MCF 10A (cell line): ENCODE measurements at regions of chr11 and their contacts with region 1.

Region 1: GRCh38 chr11:45964911-45965389 is 42.5 kb downstream of the LARGE2 start:
- DNase-seq: peak; percentile 73
- H3K4me3 Mint-ChIP-seq: no peak overlapping the region
- H3K27ac Mint-ChIP-seq: no peak overlapping the region
- H3K4me1 Mint-ChIP-seq: peaks cover 6% of the 10 kb centered on the region
- H3K27me3 Mint-ChIP-seq: no peaks in the 10 kb centered on the region
- CTCF ChIP-seq: peak; percentile 75

Region 2: GRCh38 chr11:45872513-45873356 is 92.2 kb before region 1 on chr11:
- CTCF ChIA-PET with region 1: interaction called, 11 read pairs
- POLR2A ChIA-PET with region 1: no interaction called
- intact Hi-C with region 1: no loop called
- DNase-seq: peak; percentile 75
- H3K4me3 Mint-ChIP-seq: no peak overlapping the region
- H3K27ac Mint-ChIP-seq: no peak overlapping the region
- H3K4me1 Mint-ChIP-seq: no peaks in the 10 kb centered on the region
- H3K27me3 Mint-ChIP-seq: no peaks in the 10 kb centered on the region
- CTCF ChIP-seq: peak; percentile 76

Region 3: DNA sequence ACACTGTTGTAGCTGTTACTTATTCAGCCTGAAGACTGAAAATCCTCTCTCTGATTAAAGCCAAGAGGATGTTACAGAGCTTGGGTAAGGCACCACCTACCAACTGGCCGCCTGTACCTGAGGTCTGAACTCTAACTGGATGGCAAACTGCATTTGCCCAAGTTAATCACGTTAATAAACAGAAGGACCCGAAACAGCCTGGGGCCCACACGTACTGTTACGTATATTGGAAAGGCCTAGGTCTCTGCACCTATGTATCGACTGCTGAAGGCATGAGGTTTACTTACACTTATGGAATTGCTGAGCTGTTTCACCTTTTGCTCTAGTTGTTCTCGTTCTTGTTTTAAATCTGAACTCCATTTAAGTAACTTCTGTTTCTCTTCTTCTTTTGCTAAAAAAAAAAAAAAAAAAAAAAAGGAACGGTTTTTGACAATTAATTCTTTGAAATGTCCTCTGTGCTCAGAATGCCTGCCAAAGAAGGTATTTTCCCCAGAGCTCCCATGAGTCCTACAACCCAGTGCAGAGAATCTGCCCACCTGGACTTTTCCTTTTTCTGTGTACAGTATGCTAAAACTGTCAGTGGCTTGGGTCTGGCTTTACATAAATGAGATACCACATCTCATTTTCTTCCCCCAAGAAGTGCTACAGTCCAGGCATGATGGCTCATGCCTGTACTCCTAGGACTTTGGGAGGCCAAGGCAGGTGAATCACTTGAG is 29.4 kb before region 1 on chr11:
- CTCF ChIA-PET with region 1: interaction called, 11 read pairs
- POLR2A ChIA-PET with region 1: no interaction called
- intact Hi-C with region 1: no loop called
- DNase-seq: no peak
- H3K4me3 Mint-ChIP-seq: no peak overlapping the region
- H3K27ac Mint-ChIP-seq: no peak overlapping the region
- H3K4me1 Mint-ChIP-seq: peaks cover 14% of the 10 kb centered on the region
- H3K27me3 Mint-ChIP-seq: no peaks in the 10 kb centered on the region
- CTCF ChIP-seq: no peak

Region 4: DNA sequence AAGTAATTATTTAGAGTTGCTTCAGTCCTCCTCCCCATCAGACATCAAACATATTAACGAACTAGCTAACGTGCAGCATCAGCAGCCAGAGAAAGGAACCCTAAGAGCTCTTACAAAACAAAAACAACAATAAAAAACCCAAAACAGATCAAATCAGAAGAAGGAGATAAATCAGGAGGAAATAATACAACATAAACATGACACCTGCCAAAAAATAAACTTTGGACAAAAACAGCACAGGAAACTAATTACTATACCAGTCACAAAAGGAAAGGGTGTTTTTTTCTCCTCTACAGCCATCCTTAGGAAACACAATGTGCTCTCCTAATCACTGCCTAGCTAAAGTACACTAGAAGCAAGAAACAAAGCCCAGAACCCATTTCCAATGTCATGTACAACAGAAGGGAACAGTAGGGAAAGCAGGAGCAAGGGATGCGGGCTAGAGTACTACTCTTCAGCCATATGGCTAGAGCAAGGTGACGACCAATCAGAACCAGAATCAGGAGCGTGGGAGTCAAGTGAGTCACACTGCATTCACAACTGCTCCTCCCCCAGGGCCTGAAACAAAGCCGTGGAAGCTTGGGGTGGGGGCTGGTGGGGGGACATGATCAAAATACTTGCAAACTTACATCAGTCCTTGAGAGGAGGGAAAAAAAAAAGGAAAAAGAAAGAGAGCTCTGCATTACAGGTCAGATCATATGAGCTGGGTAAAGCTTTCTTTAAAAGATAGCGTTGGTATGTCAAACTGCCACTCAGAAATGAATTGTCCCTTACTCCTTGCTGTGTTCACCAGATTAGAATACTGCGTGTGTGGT is 17.9 kb after region 1 on chr11:
- CTCF ChIA-PET with region 1: interaction called, 64 read pairs
- POLR2A ChIA-PET with region 1: interaction called, 8 read pairs
- intact Hi-C with region 1: no loop called
- DNase-seq: peak; percentile 83
- H3K4me3 Mint-ChIP-seq: no peak overlapping the region
- H3K27ac Mint-ChIP-seq: no peak overlapping the region
- H3K4me1 Mint-ChIP-seq: peaks cover 16% of the 10 kb centered on the region
- H3K27me3 Mint-ChIP-seq: no peaks in the 10 kb centered on the region
- CTCF ChIP-seq: no peak

Region 5: DNA sequence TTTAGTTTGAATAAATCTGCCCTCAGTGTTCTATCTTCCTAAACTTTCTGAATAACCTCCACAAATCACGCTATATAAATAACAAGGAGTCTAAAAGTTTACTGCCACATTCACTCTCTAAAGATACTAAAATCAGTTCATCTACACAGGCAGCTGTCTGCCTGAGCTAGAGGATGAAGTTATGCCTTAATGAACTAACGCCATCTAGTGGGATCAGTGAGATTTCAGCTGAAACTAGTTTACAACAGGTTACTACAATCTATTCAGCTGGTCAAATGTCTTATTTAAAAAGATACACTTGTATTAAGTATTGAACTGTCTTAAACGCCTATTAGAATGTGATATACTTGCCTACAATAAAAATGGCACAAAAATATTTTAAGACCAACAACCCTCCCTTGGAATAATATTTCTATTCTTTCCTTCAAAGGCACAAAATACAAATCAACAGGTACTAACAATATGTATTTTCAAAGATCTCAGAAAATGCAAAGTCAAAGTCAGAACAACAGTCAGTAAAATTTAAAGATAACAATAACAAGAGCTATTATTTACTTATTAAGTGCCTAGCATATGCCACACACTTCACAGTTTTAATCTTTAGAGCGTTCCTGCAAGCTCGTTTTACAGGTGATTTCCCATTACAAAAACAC is 41.6 kb after region 1 on chr11:
- CTCF ChIA-PET with region 1: interaction called, 57 read pairs
- POLR2A ChIA-PET with region 1: interaction called, 18 read pairs
- intact Hi-C with region 1: loop called (anchors 1 kb)
- DNase-seq: peak; percentile 74
- H3K4me3 Mint-ChIP-seq: no peak overlapping the region
- H3K27ac Mint-ChIP-seq: no peak overlapping the region
- H3K4me1 Mint-ChIP-seq: peaks cover 12% of the 10 kb centered on the region
- H3K27me3 Mint-ChIP-seq: no peaks in the 10 kb centered on the region
- CTCF ChIP-seq: peak; percentile 69

Region 6: DNA sequence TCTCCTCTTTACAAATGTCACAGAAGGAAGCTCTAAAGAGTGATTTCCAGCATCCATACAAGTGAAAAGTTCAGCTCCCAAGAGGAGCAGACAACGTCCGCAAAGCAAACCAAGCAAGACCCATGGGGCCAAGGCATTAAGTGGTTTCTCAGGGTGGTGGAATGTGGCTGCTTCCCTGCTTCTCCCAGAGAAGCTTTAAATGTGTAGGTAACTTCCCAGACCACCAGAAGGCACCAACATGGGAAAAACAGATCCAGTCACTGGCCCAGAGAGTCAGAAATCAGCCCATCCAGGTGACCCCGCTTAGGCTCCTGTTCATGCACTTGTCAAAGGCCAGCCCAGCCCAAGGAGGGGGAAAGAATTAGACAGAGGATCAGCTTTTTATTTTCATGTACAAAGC is 169.6 kb after region 1 on chr11:
- CTCF ChIA-PET with region 1: no interaction called
- POLR2A ChIA-PET with region 1: no interaction called
- intact Hi-C with region 1: no loop called
- DNase-seq: no peak
- H3K4me3 Mint-ChIP-seq: no peak overlapping the region
- H3K27ac Mint-ChIP-seq: no peak overlapping the region
- H3K4me1 Mint-ChIP-seq: no peaks in the 10 kb centered on the region
- H3K27me3 Mint-ChIP-seq: no peaks in the 10 kb centered on the region
- CTCF ChIP-seq: no peak

Region 7: DNA sequence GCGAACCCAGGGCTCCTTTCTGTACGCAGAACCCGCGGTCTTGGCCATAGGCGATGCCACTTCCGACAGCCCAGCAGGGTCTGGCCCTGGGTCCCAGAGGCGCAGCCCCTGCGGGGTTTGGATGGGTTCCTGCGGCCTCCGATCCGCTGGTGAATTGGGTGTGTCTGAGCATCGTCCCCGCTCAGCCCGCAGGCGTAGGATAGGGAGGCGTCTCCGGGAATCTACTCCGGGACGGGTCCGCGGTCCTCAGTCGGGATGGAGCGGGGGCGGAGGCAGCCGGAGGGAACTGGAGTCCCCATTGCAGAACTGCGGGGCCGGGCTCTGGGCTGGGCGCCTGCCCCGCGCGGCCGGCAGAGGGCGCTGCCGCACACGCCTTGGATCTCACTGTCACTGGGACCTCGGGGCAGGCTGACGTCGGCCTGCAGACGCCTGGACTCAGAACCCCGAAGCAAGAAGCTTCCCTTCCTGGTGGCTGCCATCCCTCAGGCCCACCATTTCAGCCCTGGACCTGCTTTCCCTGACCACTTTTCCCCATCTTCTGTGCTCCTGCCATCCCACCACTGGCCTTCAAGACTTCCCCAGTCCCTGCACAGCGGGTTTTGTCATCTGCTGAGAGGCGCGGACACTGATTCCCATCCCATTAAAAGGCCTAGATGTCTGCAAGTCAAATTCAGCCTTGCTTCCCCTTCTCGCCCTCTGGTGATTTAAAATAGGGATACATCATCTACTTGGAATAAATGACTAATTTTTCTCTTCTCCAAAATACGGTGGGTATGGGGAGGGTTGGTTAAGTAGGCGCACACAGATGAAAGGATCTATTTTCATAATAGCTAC is 274.2 kb after region 1 on chr11:
- CTCF ChIA-PET with region 1: interaction called, 10 read pairs
- POLR2A ChIA-PET with region 1: no interaction called
- intact Hi-C with region 1: loop called (anchors 1 kb)
- DNase-seq: peak; percentile 89
- H3K4me3 Mint-ChIP-seq: peak overlapping the region; percentile 81
- H3K27ac Mint-ChIP-seq: peak overlapping the region; percentile 22
- H3K4me1 Mint-ChIP-seq: peaks cover 39% of the 10 kb centered on the region
- H3K27me3 Mint-ChIP-seq: no peaks in the 10 kb centered on the region
- CTCF ChIP-seq: peak; percentile 98

Region 8: GRCh38 chr11:46315033-46315738 is 350.2 kb after region 1 on chr11:
- CTCF ChIA-PET with region 1: interaction called, 23 read pairs
- POLR2A ChIA-PET with region 1: interaction called, 3 read pairs
- intact Hi-C with region 1: no loop called
- DNase-seq: peak; percentile 87
- H3K4me3 Mint-ChIP-seq: no peak overlapping the region
- H3K27ac Mint-ChIP-seq: no peak overlapping the region
- H3K4me1 Mint-ChIP-seq: peaks cover 7% of the 10 kb centered on the region
- H3K27me3 Mint-ChIP-seq: no peaks in the 10 kb centered on the region
- CTCF ChIP-seq: peak; percentile 83